Naive thymus-derived CD8-positive, alpha-beta T cell (primary cell): ENCODE measurements at regions of chr1 and their contacts with region 1.

Region 1: DNA sequence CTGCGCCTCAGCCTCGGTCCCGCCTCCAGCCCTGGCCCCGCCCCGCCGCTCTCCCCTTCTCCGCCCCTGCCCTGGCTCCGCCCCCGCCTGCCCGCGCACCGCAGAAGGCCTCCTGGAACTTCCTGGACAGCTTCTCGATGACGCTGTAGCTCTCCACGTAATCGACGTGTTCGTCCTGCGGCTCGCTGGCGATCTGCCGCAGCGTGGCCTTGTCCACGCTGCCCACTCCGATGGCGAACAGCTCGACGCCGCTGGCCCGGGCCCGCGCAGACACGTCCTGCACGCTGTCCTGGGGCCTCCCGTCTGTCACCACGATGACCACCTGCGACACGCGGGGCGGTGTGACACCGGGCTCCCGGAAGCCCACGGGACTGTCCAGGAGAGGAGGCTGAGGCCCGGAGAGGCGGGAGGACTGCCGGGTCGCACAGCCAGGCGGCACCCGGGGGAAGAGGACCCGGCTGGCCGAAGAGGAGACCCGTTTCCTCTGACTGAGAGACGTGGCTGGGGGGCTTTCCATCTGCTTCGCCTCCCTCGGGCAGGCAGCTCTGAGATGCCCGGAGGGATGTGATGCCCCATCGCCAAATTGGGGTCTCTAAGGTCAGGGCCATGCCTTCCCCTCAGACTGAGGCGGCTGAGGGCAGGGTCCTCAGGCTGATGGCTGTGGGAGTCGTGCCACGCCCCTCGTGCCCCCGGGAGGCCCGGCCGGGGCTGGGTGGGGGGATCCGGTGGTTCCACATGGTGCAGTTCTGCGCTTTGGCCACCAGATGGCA is 4.6 kb downstream of the MATN1 start:
- DNase-seq: peak; percentile 79 to 98 (median 89)
- ATAC-seq: peak; percentile 68 to 69
- H3K4me3 Mint-ChIP-seq: peak overlapping the region; percentile 80 to 95 (median 88)
- H3K27ac Mint-ChIP-seq: peak overlapping the region; percentile 72 to 98 (median 96)
- H3K4me1 Mint-ChIP-seq: peaks cover 12 to 53% (median 49%) of the 10 kb centered on the region in 4 donors
- H3K27me3 Mint-ChIP-seq: no peaks in the 10 kb centered on the region

Region 2: DNA sequence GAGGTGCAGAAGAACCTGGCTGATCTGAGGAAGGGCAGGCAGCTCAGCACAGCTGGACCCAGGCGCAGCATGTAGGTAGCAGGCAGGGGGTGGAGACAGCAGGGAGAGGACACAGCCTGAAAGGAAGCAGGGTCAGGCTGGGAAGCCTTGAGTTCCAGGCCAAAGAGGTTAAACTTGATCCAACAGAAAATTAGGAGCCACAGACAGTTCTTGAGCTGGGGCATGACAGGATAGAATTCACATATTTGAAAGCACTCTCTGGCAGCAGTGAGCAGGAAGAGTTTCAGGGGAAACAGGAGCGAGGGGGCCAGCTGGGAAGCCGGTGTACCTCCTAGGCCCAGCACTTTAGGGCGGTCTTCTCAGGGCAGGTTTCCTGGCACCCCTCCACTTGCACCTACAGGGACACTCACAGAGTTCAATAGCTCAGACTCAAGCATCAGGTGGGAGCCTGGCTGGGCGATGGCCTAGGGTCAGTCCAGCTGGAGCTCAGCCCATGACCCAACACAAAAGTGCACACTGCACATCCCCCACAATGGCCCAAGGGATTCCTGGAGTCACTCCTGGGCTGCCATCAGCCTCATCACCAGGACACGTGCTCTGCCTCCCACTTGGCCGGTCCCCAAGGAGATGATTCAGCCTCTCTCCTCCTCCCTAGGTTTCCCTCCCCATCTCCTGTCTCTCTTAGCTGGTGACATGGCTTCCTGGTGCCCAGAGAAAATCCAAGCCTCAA is 18.1 kb before region 1 on chr1:
- POLR2A ChIA-PET with region 1: no interaction called
- DNase-seq: no peak
- ATAC-seq: no peak
- H3K4me3 Mint-ChIP-seq: no peak overlapping the region
- H3K27ac Mint-ChIP-seq: no peak overlapping the region
- H3K4me1 Mint-ChIP-seq: no peaks in the 10 kb centered on the region
- H3K27me3 Mint-ChIP-seq: peaks cover 0 to 4% (median under 1%) of the 10 kb centered on the region in 5 donors

Region 3: GRCh38 chr1:30732277-30732996 is 13.6 kb after region 1 on chr1:
- POLR2A ChIA-PET with region 1: interaction called, 58 read pairs
- DNase-seq: no peak
- ATAC-seq: peak; percentile 72 to 78
- H3K4me3 Mint-ChIP-seq: peak overlapping the region in 1 of 10 donors; percentile 18
- H3K27ac Mint-ChIP-seq: peak overlapping the region; percentile 68 to 92 (median 86)
- H3K4me1 Mint-ChIP-seq: peaks cover 18 to 55% (median 34%) of the 10 kb centered on the region in 4 donors
- H3K27me3 Mint-ChIP-seq: no peaks in the 10 kb centered on the region

Region 4: DNA sequence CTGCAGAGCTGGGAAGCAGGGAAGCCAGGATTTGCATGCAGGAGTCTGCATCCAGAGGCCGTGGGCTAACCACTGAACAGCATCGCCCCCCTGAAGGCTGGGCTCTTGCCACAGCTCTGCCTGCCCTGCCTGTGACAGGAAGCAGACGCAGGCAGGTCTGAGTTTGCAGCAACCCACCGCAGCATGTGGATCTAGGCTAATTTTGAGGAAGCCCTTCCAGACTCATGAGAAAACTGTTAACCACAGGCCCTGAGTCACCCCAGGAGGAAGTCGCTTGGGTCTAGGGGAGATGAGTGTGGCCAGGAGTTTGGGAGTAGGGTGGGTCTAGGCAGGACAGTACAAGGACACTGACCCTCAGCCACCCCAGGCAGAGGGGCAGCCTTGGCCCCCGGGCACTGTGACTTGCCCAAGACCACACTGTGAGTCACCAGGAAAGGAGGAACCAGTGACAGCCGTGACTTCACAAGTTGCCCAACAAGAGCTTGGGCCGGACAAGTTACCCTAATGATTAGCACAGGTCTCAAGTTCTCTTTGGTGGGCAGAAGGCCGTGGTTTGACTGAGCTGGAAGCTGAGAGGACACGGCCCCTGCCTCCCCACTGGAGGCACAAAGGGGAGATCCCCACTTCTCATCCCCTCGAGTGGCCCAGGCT is 37.8 kb after region 1 on chr1:
- POLR2A ChIA-PET with region 1: interaction called, 1,432 read pairs
- DNase-seq: peak; percentile 39 to 82 (median 69)
- ATAC-seq: peak; percentile 51 to 64
- H3K4me3 Mint-ChIP-seq: peak overlapping the region; percentile 92 to 100 (median 98)
- H3K27ac Mint-ChIP-seq: peak overlapping the region; percentile 90 to 99 (median 99)
- H3K4me1 Mint-ChIP-seq: peaks cover 55 to 94% (median 83%) of the 10 kb centered on the region in 4 donors
- H3K27me3 Mint-ChIP-seq: no peaks in the 10 kb centered on the region